AG04450 (cell line): ENCODE measurements at regions of chr1 and their contacts with region 1.

Region 1: DNA sequence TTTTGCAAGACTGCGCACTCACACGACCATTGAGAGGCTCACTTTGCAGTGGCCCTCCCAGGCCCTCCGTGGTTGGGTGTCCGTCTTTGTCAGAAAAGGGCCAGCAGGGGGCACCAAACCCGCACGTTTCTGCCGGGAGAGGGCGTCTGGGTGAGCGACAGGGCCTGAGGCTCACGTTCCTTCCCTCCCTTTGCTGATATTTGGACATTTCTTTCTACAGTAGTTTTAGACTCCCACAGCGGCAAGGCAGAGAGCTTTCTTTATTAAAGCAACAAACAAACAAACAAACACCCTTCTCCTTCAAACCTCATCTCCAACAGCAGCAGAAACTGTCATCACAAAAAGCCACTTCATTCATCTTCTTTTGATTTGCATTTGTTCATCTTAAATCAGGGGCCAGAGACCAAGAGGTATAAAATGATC is 79.2 kb upstream of the WDR26 start:
- DNase-seq: no peak
- H3K4me3 ChIP-seq: no peak overlapping the region
- H3K27ac ChIP-seq: no peak overlapping the region
- H3K27me3 ChIP-seq: no peaks in the 10 kb centered on the region
- CTCF ChIP-seq: peak; percentile 96

Region 2: GRCh38 chr1:224042557-224043118 is 471.2 kb before region 1 on chr1:
- CTCF ChIA-PET with region 1: no interaction called
- POLR2A ChIA-PET with region 1: no interaction called
- DNase-seq: no peak
- H3K4me3 ChIP-seq: no peak overlapping the region
- H3K27ac ChIP-seq: no peak overlapping the region
- H3K27me3 ChIP-seq: no peaks in the 10 kb centered on the region
- CTCF ChIP-seq: no peak

Region 3: GRCh38 chr1:224447251-224447650 is 66.5 kb before region 1 on chr1:
- CTCF ChIA-PET with region 1: no interaction called
- POLR2A ChIA-PET with region 1: no interaction called
- DNase-seq: no peak
- H3K4me3 ChIP-seq: no peak overlapping the region
- H3K27ac ChIP-seq: no peak overlapping the region
- H3K27me3 ChIP-seq: no peaks in the 10 kb centered on the region
- CTCF ChIP-seq: no peak

Region 4: DNA sequence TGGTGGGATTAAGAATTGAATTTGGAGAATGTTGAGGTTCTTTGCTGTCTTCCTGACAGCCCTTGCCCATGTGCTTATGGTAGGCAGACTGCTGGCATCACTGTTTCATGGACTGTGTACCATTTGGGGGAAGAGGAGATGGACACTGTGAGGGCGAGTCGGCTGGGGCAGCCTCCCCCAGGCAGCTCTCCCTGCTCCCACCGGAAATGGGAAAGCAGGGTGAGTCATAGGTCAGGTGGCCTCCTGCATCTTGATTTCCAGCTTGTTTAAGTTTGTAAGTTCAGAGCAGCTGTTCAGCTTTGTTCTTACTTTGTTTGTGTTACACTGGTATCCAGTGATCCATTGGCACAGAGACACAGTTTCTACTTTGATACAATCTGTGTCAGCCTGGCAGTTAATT is 15.1 kb after region 1 on chr1:
- CTCF ChIA-PET with region 1: interaction called, 70 read pairs
- POLR2A ChIA-PET with region 1: no interaction called
- DNase-seq: peak; percentile 89
- H3K4me3 ChIP-seq: no peak overlapping the region
- H3K27ac ChIP-seq: peak overlapping the region; percentile 71
- H3K27me3 ChIP-seq: no peaks in the 10 kb centered on the region
- CTCF ChIP-seq: no peak

Region 5: DNA sequence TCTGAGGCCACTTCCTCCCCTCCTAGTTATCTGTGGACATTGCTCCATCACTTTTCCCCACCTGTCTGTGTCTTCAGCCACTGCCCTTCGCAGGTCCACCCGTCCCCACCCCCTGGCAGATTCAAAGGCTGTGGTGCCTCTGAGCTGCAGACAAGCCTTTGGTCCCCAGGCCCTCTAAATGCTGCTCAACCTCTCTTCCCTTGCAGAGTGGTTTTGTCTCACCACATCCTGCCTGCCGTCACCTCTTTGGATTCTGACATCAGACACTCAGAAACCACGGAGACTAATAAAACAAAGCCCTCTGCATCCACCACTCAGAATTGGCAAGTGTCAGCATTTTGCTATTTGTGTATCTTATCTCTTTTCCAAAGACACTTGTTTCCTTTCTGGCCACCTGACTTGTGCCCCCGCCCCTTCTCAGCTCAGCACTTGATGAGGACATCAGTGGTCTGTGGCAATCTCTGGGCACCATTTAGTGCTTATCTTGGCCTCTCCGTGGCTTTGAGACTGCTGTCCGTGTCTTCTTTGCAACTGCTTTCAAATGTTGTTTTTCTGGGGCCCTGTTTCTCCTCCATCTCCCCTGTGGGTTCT is 110.0 kb after region 1 on chr1:
- CTCF ChIA-PET with region 1: interaction called, 18 read pairs
- POLR2A ChIA-PET with region 1: no interaction called
- DNase-seq: peak; percentile 74
- H3K4me3 ChIP-seq: no peak overlapping the region
- H3K27ac ChIP-seq: peak overlapping the region; percentile 90
- H3K27me3 ChIP-seq: peaks cover 3% of the 10 kb centered on the region
- CTCF ChIP-seq: no peak

Region 6: DNA sequence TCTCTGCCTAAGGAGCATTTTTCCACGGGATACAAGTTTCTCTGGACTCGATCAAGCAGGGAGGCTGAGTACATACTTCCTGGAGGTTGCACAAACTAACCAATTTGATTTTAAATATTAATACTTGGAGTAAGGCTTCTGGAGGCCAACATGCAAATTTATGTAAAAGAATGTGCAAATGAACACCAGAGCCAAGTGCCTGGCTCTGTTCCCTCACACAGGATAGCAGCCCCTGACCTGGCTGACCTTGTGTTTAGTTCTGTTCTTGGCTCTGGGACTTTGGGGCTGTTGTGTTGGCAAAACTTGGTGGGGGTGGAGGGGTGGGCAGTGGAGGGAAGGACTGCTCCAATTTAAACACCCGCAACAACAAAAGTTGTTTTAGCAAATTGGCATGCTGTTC is 136.5 kb after region 1 on chr1:
- CTCF ChIA-PET with region 1: interaction called, 14 read pairs
- POLR2A ChIA-PET with region 1: no interaction called
- DNase-seq: no peak
- H3K4me3 ChIP-seq: no peak overlapping the region
- H3K27ac ChIP-seq: no peak overlapping the region
- H3K27me3 ChIP-seq: no peaks in the 10 kb centered on the region
- CTCF ChIP-seq: no peak

Region 7: GRCh38 chr1:224846119-224846907 is 332.5 kb after region 1 on chr1:
- CTCF ChIA-PET with region 1: interaction called, 327 read pairs
- POLR2A ChIA-PET with region 1: no interaction called
- DNase-seq: no peak
- H3K4me3 ChIP-seq: no peak overlapping the region
- H3K27ac ChIP-seq: no peak overlapping the region
- H3K27me3 ChIP-seq: no peaks in the 10 kb centered on the region
- CTCF ChIP-seq: no peak

Region 8: GRCh38 chr1:224879162-224879803 is 365.5 kb after region 1 on chr1:
- CTCF ChIA-PET with region 1: interaction called, 11 read pairs
- POLR2A ChIA-PET with region 1: no interaction called
- DNase-seq: no peak
- H3K4me3 ChIP-seq: no peak overlapping the region
- H3K27ac ChIP-seq: no peak overlapping the region
- H3K27me3 ChIP-seq: peaks cover 10% of the 10 kb centered on the region
- CTCF ChIP-seq: no peak

Region 9: GRCh38 chr1:224922404-224923164 is 408.8 kb after region 1 on chr1:
- CTCF ChIA-PET with region 1: interaction called, 134 read pairs
- POLR2A ChIA-PET with region 1: no interaction called
- DNase-seq: peak; percentile 1
- H3K4me3 ChIP-seq: no peak overlapping the region
- H3K27ac ChIP-seq: no peak overlapping the region
- H3K27me3 ChIP-seq: no peaks in the 10 kb centered on the region
- CTCF ChIP-seq: peak; percentile 82